CD8-positive, alpha-beta T cell (primary cell): ENCODE measurements at regions of chr10 and their contacts with region 1.

Region 1: GRCh38 chr10:71771821-71772617 is 1.3 kb downstream of the VSIR start:
- DNase-seq: peak in 2 of 9 experiments; percentile 30 to 50
- ATAC-seq: no peak
- H3K4me3 ChIP-seq: peak overlapping the region; percentile 88 to 100
- H3K4me3 Mint-ChIP-seq: peak overlapping the region; percentile 95
- H3K27ac ChIP-seq: peak overlapping the region; percentile 80 to 89
- H3K27ac Mint-ChIP-seq: peak overlapping the region; percentile 92
- H3K4me1 ChIP-seq: peaks cover 73% of the 10 kb centered on the region
- H3K4me1 Mint-ChIP-seq: peaks cover 81% of the 10 kb centered on the region
- H3K27me3 ChIP-seq: no peaks in the 10 kb centered on the region
- H3K27me3 Mint-ChIP-seq: no peaks in the 10 kb centered on the region
- CTCF ChIP-seq: no peak

Region 2: GRCh38 chr10:71319042-71319799 is 452.8 kb before region 1 on chr10 and contains the start of gene SLC29A3:
- CTCF ChIA-PET with region 1: interaction called, 17 read pairs
- POLR2A ChIA-PET with region 1: no interaction called
- intact Hi-C with region 1: no loop called
- DNase-seq: peak; percentile 69 to 92 (median 80)
- ATAC-seq: peak; percentile 87
- H3K4me3 ChIP-seq: peak within 1 kb of the TSS; percentile 83 to 91
- H3K4me3 Mint-ChIP-seq: peak within 1 kb of the TSS; percentile 92
- H3K27ac ChIP-seq: peak within 1 kb of the TSS; percentile 58 to 61
- H3K27ac Mint-ChIP-seq: peak within 1 kb of the TSS; percentile 80
- H3K4me1 ChIP-seq: peaks cover 18% of the 10 kb centered on the region
- H3K4me1 Mint-ChIP-seq: peaks cover 45% of the 10 kb centered on the region
- H3K27me3 ChIP-seq: no peaks in the 10 kb centered on the region
- H3K27me3 Mint-ChIP-seq: no peaks in the 10 kb centered on the region
- CTCF ChIP-seq: peak; percentile 38
- total RNA-seq, gene SLC29A3: 1.4 to 2.9 TPM

Region 3: GRCh38 chr10:71719042-71719441 is 53.0 kb before region 1 on chr10:
- CTCF ChIA-PET with region 1: interaction called, 242 read pairs
- POLR2A ChIA-PET with region 1: interaction called, 162 read pairs
- intact Hi-C with region 1: loop called in 1 of 2 experiments (anchors 5 kb)
- DNase-seq: no peak
- ATAC-seq: no peak
- H3K4me3 ChIP-seq: no peak overlapping the region
- H3K4me3 Mint-ChIP-seq: no peak overlapping the region
- H3K27ac ChIP-seq: no peak overlapping the region
- H3K27ac Mint-ChIP-seq: no peak overlapping the region
- H3K4me1 ChIP-seq: peaks cover 49% of the 10 kb centered on the region
- H3K4me1 Mint-ChIP-seq: peaks cover 54% of the 10 kb centered on the region
- H3K27me3 ChIP-seq: no peaks in the 10 kb centered on the region
- H3K27me3 Mint-ChIP-seq: no peaks in the 10 kb centered on the region
- CTCF ChIP-seq: no peak

Region 4: DNA sequence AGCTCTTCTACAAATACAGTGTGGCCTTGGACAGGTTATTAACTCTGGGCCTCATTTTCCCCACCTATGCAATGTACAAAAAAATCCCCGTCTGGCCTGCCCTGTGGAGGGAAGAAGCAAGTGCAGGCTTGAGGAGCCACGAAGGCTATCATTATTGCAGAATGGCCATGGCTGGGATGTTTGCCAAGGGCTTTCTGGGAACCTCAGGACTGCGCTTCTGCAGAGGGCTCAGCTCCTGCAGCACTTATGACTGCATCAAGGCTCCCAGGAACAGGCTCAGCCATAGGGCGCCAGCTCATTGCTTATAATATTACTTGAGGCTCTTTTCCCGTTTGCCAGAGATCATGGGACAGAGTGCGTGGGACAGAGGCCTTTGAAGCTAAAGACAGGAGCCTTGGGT is 31.9 kb before region 1 on chr10:
- CTCF ChIA-PET with region 1: interaction called, 61 read pairs
- POLR2A ChIA-PET with region 1: interaction called, 31 read pairs
- intact Hi-C with region 1: no loop called
- DNase-seq: no peak
- ATAC-seq: no peak
- H3K4me3 ChIP-seq: peak overlapping the region in 1 of 2 experiments; percentile 45
- H3K4me3 Mint-ChIP-seq: peak overlapping the region; percentile 41
- H3K27ac ChIP-seq: peak overlapping the region in 1 of 2 experiments; percentile 38
- H3K27ac Mint-ChIP-seq: peak overlapping the region; percentile 93
- H3K4me1 ChIP-seq: peaks cover 100% of the 10 kb centered on the region
- H3K4me1 Mint-ChIP-seq: peaks cover 99% of the 10 kb centered on the region
- H3K27me3 ChIP-seq: no peaks in the 10 kb centered on the region
- H3K27me3 Mint-ChIP-seq: no peaks in the 10 kb centered on the region
- CTCF ChIP-seq: no peak

Region 5: GRCh38 chr10:71756311-71757191 is 15.5 kb before region 1 on chr10:
- CTCF ChIA-PET with region 1: interaction called, 114 read pairs
- POLR2A ChIA-PET with region 1: interaction called, 300 read pairs
- intact Hi-C with region 1: loop called (anchors 1 kb)
- DNase-seq: peak in 3 of 9 experiments; percentile 29 to 81 (median 61)
- ATAC-seq: peak; percentile 69
- H3K4me3 ChIP-seq: peak overlapping the region; percentile 7 to 38
- H3K4me3 Mint-ChIP-seq: peak overlapping the region; percentile 75
- H3K27ac ChIP-seq: peak overlapping the region; percentile 48 to 73
- H3K27ac Mint-ChIP-seq: peak overlapping the region; percentile 95
- H3K4me1 ChIP-seq: peaks cover 93% of the 10 kb centered on the region
- H3K4me1 Mint-ChIP-seq: peaks cover 91% of the 10 kb centered on the region
- H3K27me3 ChIP-seq: no peaks in the 10 kb centered on the region
- H3K27me3 Mint-ChIP-seq: no peaks in the 10 kb centered on the region
- CTCF ChIP-seq: no peak

Region 6: GRCh38 chr10:71845410-71846405 is 73.7 kb after region 1 on chr10:
- CTCF ChIA-PET with region 1: interaction called, 4 read pairs
- POLR2A ChIA-PET with region 1: interaction called, 7 read pairs
- intact Hi-C with region 1: loop called (anchors 2 to 5 kb)
- DNase-seq: no peak
- ATAC-seq: no peak
- H3K4me3 ChIP-seq: no peak overlapping the region
- H3K4me3 Mint-ChIP-seq: no peak overlapping the region
- H3K27ac ChIP-seq: no peak overlapping the region
- H3K27ac Mint-ChIP-seq: no peak overlapping the region
- H3K4me1 ChIP-seq: peaks cover 43% of the 10 kb centered on the region
- H3K4me1 Mint-ChIP-seq: peaks cover 84% of the 10 kb centered on the region
- H3K27me3 ChIP-seq: no peaks in the 10 kb centered on the region
- H3K27me3 Mint-ChIP-seq: no peaks in the 10 kb centered on the region
- CTCF ChIP-seq: no peak